Activated naive CD4-positive, alpha-beta T cell treated with anti-CD3 and anti-CD28 coated beads for 36 hours (primary cell): ENCODE measurements at regions of chr2 and their contacts with region 1.

Region 1: GRCh38 chr2:171086352-171087290 is 74.1 kb downstream of the TLK1 start:
- DNase-seq: peak; percentile 80
- H3K4me3 Mint-ChIP-seq: peak overlapping the region; percentile 77
- H3K27ac Mint-ChIP-seq: peak overlapping the region; percentile 74
- H3K4me1 Mint-ChIP-seq: peaks cover 65% of the 10 kb centered on the region
- H3K27me3 Mint-ChIP-seq: no peaks in the 10 kb centered on the region

Region 2: DNA sequence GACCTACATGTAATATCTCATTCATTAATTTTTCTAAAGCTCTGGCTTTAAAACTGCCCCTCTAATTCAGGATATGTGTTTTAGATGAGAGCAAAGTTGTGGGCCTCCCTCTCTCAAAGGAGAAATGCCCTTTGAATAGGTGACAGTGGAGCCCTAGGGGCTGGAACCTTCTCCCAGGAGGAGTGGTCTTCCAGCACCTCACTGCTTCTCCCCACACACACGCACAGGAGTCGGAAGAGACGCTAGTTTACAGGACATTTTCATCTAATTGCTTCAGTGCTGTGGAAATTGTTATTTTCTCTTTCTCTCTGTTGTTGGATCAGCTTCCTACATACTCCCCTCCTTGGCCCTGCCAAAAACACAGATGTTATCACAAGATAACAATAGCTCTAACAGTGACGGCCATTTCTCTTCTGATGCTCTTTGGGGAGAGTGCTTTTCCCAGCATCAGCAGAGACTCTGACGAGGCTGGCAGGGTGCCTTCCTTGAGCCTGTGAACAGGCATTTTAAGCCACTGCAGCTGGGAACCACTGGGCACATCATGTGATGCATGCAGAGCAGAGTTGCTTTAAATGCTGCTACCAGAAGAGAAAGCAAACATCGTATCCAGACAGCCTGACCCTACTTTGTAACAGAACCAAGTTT is 580.9 kb before region 1 on chr2:
- CTCF ChIA-PET with region 1: no interaction called
- intact Hi-C with region 1: no loop called
- DNase-seq: no peak
- H3K4me3 Mint-ChIP-seq: no peak overlapping the region
- H3K27ac Mint-ChIP-seq: no peak overlapping the region
- H3K4me1 Mint-ChIP-seq: peaks cover 27% of the 10 kb centered on the region
- H3K27me3 Mint-ChIP-seq: peaks cover 1% of the 10 kb centered on the region

Region 3: DNA sequence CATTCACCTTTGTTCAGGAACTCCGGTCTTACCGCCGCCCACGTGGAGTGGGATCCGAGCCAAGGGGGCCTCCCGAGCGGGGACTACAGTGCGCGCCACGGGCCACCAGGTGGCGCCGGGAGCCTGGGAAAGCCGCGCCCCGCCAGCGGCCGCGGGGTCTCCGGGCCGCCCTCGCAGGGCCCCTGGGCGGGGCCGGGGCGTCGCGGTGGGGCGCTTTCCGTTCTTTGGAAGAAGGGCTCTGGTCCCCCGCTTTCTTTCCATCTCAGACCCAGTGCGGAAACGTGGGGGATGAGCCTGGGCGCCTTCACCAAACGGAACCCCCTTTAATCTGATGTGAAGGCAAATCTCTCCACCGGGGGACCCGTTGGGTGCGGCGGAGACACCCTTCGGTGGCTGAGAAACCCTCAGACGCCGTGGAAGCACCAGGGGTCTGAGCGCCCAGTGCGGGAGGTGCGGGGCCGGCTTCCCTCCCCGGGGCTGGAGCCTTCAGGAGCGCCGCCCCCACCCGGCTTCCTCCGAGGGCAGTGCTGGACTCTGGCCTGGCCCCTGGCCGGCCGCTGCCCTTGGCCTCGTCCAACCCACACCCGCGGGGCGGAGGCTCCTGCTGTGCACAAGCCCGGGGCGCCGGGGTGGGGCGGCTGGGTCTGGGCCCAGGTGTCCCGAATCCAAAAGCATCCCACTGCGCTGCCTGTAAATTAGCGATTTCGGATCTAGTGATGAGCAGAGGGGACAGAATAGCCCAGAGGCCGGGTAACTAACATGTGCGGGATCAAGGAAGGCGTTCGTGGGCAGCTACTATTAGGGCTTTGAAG is 112.9 kb before region 1 on chr2:
- CTCF ChIA-PET with region 1: interaction called, 12 read pairs
- intact Hi-C with region 1: loop called (anchors 1 kb)
- DNase-seq: peak; percentile 92
- H3K4me3 Mint-ChIP-seq: peak overlapping the region; percentile 66
- H3K27ac Mint-ChIP-seq: peak overlapping the region; percentile 48
- H3K4me1 Mint-ChIP-seq: peaks cover 9% of the 10 kb centered on the region
- H3K27me3 Mint-ChIP-seq: no peaks in the 10 kb centered on the region

Region 4: DNA sequence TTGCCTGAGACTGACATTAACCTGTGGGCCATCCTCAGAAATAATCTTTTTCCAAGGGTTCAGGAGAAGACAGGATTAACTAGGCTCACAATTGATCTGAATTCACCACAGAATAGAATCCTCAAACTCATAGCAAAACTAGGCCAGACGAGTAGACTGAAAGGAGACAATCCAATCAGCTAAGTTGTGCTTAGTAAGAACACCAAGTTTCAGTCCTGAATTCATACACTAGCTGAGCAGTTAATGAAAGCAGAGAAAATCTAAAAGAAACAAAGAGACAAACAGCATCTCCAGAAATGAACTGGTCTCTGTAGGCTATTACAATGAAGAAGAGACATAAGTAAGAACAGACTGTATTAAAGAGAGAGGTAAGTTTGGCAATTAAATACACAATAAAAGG is 68.1 kb before region 1 on chr2:
- CTCF ChIA-PET with region 1: interaction called, 5 read pairs
- intact Hi-C with region 1: loop called (anchors 1 kb)
- DNase-seq: no peak
- H3K4me3 Mint-ChIP-seq: no peak overlapping the region
- H3K27ac Mint-ChIP-seq: peak overlapping the region; percentile 53
- H3K4me1 Mint-ChIP-seq: peaks cover 36% of the 10 kb centered on the region
- H3K27me3 Mint-ChIP-seq: no peaks in the 10 kb centered on the region

Region 5: DNA sequence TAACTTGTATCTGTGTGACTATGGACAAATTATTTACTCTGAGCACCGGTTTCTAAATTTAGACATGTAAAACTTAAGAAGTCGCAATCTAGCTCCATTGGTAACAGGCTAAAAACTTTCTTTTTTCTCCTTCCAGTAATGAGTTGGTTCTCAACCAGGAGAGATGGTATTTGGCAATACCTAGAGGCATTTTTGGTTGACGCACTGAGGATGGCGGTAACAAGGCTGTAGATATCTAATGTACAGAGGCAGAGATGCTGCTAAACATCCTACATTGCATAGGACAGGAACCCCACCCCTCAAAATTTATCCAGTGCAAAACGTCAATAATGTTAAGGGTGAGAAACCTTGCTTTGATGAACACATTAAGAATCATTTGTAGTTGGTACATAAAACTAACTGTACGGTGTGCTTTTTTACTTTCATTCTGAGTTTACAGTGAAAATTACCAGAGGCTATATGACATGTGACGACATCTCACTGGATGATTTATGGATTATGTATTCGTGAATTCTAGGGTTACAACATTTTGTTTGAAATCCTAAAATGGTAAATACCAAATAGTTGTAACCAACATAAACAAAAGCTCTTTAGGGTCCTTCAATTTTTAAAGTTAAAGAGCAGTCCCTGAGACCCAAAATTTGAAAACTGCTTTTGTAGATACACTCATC is 17.2 kb before region 1 on chr2:
- CTCF ChIA-PET with region 1: interaction called, 11 read pairs
- intact Hi-C with region 1: loop called (anchors 2 kb)
- DNase-seq: no peak
- H3K4me3 Mint-ChIP-seq: no peak overlapping the region
- H3K27ac Mint-ChIP-seq: no peak overlapping the region
- H3K4me1 Mint-ChIP-seq: peaks cover 16% of the 10 kb centered on the region
- H3K27me3 Mint-ChIP-seq: no peaks in the 10 kb centered on the region

Region 6: GRCh38 chr2:171260471-171261424 is 174.1 kb after region 1 on chr2:
- CTCF ChIA-PET with region 1: interaction called, 4 read pairs
- intact Hi-C with region 1: loop called (anchors 1 kb)
- DNase-seq: peak; percentile 70
- H3K4me3 Mint-ChIP-seq: no peak overlapping the region
- H3K27ac Mint-ChIP-seq: peak overlapping the region; percentile 44
- H3K4me1 Mint-ChIP-seq: peaks cover 35% of the 10 kb centered on the region
- H3K27me3 Mint-ChIP-seq: no peaks in the 10 kb centered on the region

Region 7: DNA sequence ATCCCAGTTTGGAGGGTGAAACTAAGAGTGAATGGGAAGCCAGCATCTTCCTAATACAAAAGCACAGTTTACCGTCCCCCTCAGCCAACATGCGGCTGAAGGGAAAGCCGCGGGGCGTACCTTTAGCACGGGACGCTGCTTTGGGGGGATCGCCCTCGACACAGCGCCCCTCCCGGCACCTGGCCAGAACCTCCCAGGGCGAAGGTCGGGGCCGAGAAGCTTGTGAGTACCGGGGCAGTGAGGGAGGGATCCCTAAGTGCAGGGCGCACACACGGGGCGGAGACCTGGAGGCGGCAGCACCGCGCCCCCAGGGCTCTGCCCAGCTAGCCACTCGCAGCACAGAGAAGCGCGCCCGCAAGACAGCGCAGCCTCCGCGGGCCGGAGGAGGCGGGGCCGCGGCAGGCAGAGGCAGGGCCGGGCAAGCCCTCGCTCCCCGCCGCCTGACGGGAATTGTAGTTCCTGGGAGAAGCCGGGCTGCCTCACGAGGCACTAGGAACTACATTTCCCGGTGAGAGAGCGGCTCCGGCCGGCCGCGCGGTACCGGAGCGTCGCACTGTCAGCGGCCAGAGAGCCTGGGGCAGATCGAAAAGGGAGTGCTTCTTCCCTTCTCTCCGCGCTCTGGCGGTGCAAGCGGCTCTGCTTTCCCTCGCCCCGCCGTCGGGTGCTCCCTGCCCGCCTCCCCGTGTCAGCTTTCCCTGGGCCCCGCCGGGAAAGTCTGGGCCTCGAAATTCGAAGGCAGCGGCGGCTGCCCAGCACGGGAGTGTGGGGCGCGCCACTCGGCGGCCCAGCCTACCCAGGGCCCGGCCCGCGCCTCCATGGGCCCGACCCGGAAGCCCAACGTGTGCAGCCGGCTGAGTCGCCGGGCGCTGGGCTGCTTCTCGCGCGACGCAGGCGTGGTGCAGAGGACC is 347.4 kb after region 1 on chr2 and contains the starts of genes DCAF17 and METTL8:
- CTCF ChIA-PET with region 1: no interaction called
- intact Hi-C with region 1: loop called (anchors 1 kb)
- DNase-seq: peak; percentile 96
- H3K4me3 Mint-ChIP-seq: peak within 1 kb of the TSS; percentile 86
- H3K27ac Mint-ChIP-seq: peak within 1 kb of the TSS; percentile 94
- H3K4me1 Mint-ChIP-seq: peaks cover 54% of the 10 kb centered on the region
- H3K27me3 Mint-ChIP-seq: no peaks in the 10 kb centered on the region
- total RNA-seq, gene DCAF17: 21.1 to 21.3 TPM
- total RNA-seq, gene METTL8: 32.9 to 34.5 TPM